ENCODE measurements at regions of chr1 and their contacts with region 1.

Region 1: GRCh38 chr1:85259118-85259911 is at the start of gene C1orf52:
- DNase-seq: peak; percentile 99
- H3K4me3 ChIP-seq: peak within 1 kb of the TSS; percentile 74 to 93 (median 90)
- H3K27ac ChIP-seq: peak within 1 kb of the TSS; percentile 67 to 92 (median 87)
- H3K4me1 ChIP-seq: peaks cover 15 to 58% (median 49%) of the 10 kb centered on the region in 6 donors
- H3K27me3 ChIP-seq: no peaks in the 10 kb centered on the region
- CTCF ChIP-seq: peak; percentile 97 to 100 (median 98)
- POLR2A ChIP-seq: peak in 1 of 3 donors; percentile 50
- total RNA-seq, gene C1orf52: 16.2 to 28.4 (median 21.1) TPM

Region 2: GRCh38 chr1:84944767-84945486 is 314.4 kb before region 1 on chr1:
- intact Hi-C with region 1: loop called (anchors 5 kb)
- DNase-seq: no peak
- H3K4me3 ChIP-seq: peak overlapping the region; percentile 24 to 68 (median 38)
- H3K27ac ChIP-seq: peak overlapping the region; percentile 76 to 86 (median 83)
- H3K4me1 ChIP-seq: peaks cover 3 to 16% (median 13%) of the 10 kb centered on the region in 6 donors
- H3K27me3 ChIP-seq: no peaks in the 10 kb centered on the region
- CTCF ChIP-seq: peak; percentile 90 to 95 (median 92)
- POLR2A ChIP-seq: no peak

Region 3: DNA sequence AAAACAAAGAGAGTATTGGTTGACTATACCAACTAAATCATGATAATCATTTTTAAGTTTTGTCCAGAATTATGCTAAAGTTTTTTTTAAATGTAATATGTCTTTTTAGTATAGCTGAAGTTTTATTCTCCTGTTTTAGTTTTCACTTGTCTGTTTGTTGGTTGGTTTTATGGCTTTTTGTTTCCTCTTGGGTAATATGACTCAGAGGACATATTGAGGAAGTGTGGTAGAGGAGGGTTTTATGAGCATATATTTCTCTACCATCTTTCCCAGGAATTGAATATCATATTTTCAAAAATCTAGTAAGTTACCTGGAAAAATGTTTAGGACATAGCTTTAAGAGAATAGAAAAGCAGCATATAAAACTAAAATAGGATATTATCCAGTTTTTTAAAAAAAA is 142.5 kb before region 1 on chr1:
- intact Hi-C with region 1: loop called (anchors 10 kb)
- DNase-seq: no peak
- H3K4me3 ChIP-seq: no peak overlapping the region
- H3K27ac ChIP-seq: no peak overlapping the region
- H3K4me1 ChIP-seq: no peaks in the 10 kb centered on the region
- H3K27me3 ChIP-seq: no peaks in the 10 kb centered on the region
- CTCF ChIP-seq: no peak
- POLR2A ChIP-seq: no peak

Region 4: GRCh38 chr1:85195703-85196102 is 63.6 kb before region 1 on chr1:
- intact Hi-C with region 1: no loop called
- DNase-seq: no peak
- H3K4me3 ChIP-seq: no peak overlapping the region
- H3K27ac ChIP-seq: no peak overlapping the region
- H3K4me1 ChIP-seq: peaks cover 0 to 21% (median 12%) of the 10 kb centered on the region in 6 donors
- H3K27me3 ChIP-seq: peaks cover 0 to 17% (median 8%) of the 10 kb centered on the region in 7 donors
- CTCF ChIP-seq: no peak
- POLR2A ChIP-seq: no peak

Measured in spleen (tissue), 13 donors.